Activated naive CD4-positive, alpha-beta T cell treated with anti-CD3 and anti-CD28 coated beads for 36 hours (primary cell): ENCODE measurements at regions of chr11 and their contacts with region 1.

Region 1: DNA sequence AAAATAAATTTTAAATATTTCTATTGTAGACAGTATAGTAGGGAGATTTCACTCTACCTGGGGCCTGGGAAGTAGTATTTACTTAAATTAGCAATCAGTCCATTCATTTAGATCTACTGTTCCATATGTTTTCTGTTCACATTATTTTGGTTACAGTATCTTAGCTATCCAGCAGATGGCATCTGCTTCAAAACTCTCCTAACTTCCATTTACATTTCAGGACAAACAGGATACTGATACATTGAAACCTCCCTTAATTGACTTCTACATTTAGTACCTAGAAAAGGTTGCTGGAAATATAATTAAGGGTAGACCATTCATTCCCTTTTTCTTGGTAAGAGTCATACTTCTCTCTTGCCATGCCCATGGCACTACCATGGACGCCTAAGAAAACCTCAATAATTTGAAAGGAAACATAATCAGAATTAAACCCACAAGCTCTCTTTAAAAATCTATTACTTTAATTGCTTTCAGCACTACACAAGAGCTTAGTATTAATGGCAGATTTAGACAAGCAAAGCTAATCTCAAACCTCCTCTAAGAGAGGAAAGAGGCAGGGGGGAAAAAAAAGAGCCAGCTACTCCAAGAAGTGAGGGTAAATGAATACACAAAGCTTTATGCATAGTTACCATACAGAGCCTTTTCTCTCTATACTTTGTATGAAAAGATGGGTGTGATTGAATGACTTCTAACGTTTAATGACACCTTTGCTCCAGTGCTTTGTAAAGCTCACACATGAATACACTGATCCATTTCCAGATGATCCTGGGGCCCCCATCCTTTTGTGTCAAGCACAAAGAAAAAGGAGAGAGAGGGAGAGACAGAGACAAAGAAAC is 131.2 kb upstream of the MTMR2 start:
- DNase-seq: no peak
- H3K4me3 Mint-ChIP-seq: no peak overlapping the region
- H3K27ac Mint-ChIP-seq: peak overlapping the region; percentile 87
- H3K4me1 Mint-ChIP-seq: peaks cover 81% of the 10 kb centered on the region
- H3K27me3 Mint-ChIP-seq: no peaks in the 10 kb centered on the region

Region 2: DNA sequence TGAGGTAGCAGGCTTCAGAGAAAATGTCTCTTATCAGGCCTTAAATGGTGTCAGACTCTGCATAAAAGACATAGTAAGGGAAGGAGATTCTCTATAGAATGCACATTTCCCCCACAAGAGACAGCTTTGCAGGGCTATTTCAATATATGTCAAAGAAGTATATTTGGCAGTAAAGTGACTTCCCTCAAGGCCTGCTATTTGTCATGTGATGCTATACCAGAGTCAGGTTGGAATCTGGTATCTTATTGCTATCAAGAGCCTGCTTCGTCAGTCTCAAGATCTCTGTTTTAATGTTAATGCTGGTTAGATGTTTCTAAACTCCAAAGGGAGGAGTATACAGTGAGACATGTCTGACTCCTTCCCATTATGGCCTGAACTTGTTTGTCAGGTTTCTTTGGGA is 90.8 kb before region 1 on chr11:
- CTCF ChIA-PET with region 1: no interaction called
- intact Hi-C with region 1: no loop called
- DNase-seq: no peak
- H3K4me3 Mint-ChIP-seq: no peak overlapping the region
- H3K27ac Mint-ChIP-seq: no peak overlapping the region
- H3K4me1 Mint-ChIP-seq: no peaks in the 10 kb centered on the region
- H3K27me3 Mint-ChIP-seq: no peaks in the 10 kb centered on the region

Region 3: GRCh38 chr11:96043291-96043690 is 11.8 kb before region 1 on chr11:
- CTCF ChIA-PET with region 1: interaction called, 14 read pairs
- intact Hi-C with region 1: no loop called
- DNase-seq: no peak
- H3K4me3 Mint-ChIP-seq: no peak overlapping the region
- H3K27ac Mint-ChIP-seq: no peak overlapping the region
- H3K4me1 Mint-ChIP-seq: peaks cover 46% of the 10 kb centered on the region
- H3K27me3 Mint-ChIP-seq: no peaks in the 10 kb centered on the region

Region 4: DNA sequence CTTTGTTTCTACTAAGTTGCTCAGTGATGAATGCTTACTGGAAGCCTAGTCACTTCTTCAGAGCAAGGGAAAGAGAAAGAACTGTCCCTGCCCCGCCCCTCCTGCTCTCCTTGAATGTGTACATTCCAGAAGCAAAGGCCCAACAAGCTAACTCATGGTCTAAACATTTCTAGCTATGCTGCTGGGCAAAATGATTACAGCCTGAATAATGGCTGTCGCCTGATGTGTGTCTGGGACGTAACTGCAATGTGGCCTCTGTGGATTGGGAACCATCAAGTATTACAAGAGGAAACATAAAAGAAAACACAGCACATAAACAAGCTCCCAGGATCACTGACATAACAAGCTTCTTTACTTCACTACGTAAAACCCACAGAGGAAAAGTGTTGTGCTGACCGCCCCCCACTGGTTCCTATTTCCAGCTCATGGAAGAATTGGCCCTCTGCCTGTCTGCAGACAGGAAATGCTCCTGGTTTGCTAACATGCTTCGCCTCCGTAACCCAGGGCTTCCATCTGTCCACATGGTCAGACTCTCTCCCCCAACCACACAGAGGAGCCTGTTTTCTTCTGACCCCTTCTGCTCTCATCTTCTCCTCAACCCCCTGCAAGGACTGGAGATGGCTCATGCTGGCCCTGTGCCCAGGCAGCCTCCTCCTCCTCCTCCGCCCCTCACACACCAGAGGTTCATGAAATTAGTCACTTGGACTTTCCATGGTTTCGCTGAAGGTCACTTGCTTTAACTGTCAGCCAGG is 100.7 kb after region 1 on chr11:
- CTCF ChIA-PET with region 1: interaction called, 10 read pairs
- intact Hi-C with region 1: no loop called
- DNase-seq: peak; percentile 84
- H3K4me3 Mint-ChIP-seq: peak overlapping the region; percentile 38
- H3K27ac Mint-ChIP-seq: peak overlapping the region; percentile 96
- H3K4me1 Mint-ChIP-seq: peaks cover 69% of the 10 kb centered on the region
- H3K27me3 Mint-ChIP-seq: no peaks in the 10 kb centered on the region